Natural killer cell (primary cell): ENCODE measurements at regions of chr16 and their contacts with region 1.

Region 1: GRCh38 chr16:46689365-46690280 is at the start of gene ORC6:
- DNase-seq: peak; percentile 96 to 97
- ATAC-seq: peak; percentile 75 to 90 (median 79)
- H3K4me3 ChIP-seq: peak within 1 kb of the TSS; percentile 84
- H3K4me3 Mint-ChIP-seq: no peak within 1 kb of the TSS
- H3K27ac ChIP-seq: peak within 1 kb of the TSS; percentile 94
- H3K27ac Mint-ChIP-seq: no peak within 1 kb of the TSS
- H3K4me1 ChIP-seq: peaks cover 22% of the 10 kb centered on the region
- H3K4me1 Mint-ChIP-seq: peaks cover 21 to 28% of the 10 kb centered on the region in 2 donors
- H3K27me3 ChIP-seq: no peaks in the 10 kb centered on the region
- H3K27me3 Mint-ChIP-seq: no peaks in the 10 kb centered on the region
- CTCF ChIP-seq: peak; percentile 35
- total RNA-seq, gene ORC6: 2.9 to 11.4 (median 5.9) TPM

Region 2: DNA sequence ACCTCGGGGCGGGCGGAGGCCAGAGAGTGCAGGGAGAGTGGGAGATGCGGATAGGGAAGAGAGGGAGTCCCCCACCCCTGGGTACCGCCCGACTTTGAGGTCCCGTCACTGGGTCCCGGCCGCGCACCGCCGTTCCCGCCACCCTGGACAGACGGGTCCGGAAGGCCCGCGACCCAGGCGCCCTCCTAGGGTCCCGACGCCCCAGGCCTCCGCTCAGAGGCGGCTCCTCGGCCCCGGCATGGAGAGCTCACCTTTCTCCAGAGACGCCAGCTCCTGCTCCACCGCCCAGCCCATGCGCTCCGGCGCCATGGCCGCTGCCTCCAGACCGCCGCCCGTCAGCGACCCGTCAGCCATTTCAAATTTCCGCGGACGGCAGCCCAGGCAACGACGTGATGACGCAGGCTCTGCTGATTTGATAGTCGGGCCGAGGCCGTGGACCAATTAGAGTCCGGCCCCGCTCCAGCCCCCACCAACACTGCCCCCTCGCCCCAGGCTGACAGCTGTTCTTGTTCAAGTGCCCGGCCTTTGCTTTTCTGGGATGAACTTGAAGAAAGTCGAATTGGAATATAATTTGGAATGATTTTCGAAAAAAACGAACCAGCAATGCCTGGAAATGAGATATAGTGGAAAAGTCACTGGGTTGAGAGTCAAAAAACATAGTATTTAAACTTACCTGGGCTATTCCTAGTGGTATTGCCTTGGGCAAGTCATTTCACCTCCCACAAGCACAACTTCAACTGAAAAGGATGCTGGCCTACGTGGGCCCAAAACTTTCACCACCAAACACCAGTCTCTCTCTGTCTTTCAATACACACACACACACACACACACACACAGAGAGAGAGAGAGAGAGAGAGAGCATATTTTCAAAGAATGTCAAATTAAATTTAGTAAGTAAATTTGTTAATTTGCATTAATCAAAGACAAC is 68.4 kb before region 1 on chr16 and contains the start of gene SHCBP1:
- intact Hi-C with region 1: loop called (anchors 2 kb)
- DNase-seq: peak; percentile 60 to 77
- ATAC-seq: peak; percentile 90 to 96 (median 96)
- H3K4me3 ChIP-seq: peak within 1 kb of the TSS; percentile 41
- H3K4me3 Mint-ChIP-seq: peak within 1 kb of the TSS; percentile 95
- H3K27ac ChIP-seq: no peak within 1 kb of the TSS
- H3K27ac Mint-ChIP-seq: peak within 1 kb of the TSS; percentile 77 to 89
- H3K4me1 ChIP-seq: peaks cover 9% of the 10 kb centered on the region
- H3K4me1 Mint-ChIP-seq: peaks cover 18 to 22% of the 10 kb centered on the region in 2 donors
- H3K27me3 ChIP-seq: no peaks in the 10 kb centered on the region
- H3K27me3 Mint-ChIP-seq: no peaks in the 10 kb centered on the region
- CTCF ChIP-seq: no peak
- total RNA-seq, gene SHCBP1: 2.2 to 3.6 (median 3.5) TPM

Region 3: DNA sequence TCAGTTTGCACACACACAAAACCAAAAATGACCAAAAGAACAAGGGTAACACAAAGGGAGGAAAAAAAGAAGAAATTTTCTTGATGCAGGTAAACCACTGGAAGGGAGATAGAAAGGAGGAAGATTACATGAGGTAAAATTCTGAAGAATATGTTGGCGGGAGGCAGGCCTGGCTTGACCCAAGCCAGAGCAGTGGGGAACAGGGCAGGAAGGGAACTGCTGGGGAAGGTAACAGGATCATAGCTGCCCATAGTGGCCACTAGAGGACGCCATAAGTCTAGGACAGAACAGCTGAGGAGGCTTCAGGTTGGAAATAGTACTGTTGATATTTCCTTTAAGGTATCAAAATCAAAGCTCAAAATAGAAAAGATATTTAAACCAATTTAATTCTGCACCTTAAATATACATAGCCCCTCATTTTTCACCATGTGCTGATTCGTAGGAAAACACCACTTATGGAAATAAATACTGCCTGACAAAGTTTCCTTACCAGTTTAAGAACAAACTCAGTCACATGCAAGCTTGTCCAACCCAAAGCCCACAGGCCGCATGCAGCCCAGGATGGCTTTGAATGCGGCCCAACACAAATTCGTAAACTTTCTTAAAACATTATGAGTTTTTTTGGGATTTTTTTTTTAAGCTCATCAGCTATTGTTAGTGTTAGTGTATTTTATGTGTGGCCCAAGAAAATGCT is 16.2 kb before region 1 on chr16:
- intact Hi-C with region 1: loop called (anchors 1 kb)
- DNase-seq: peak in 1 of 2 donors; percentile 80
- ATAC-seq: peak; percentile 79 to 86 (median 84)
- H3K4me3 ChIP-seq: no peak overlapping the region
- H3K4me3 Mint-ChIP-seq: no peak overlapping the region
- H3K27ac ChIP-seq: no peak overlapping the region
- H3K27ac Mint-ChIP-seq: no peak overlapping the region
- H3K4me1 ChIP-seq: no peaks in the 10 kb centered on the region
- H3K4me1 Mint-ChIP-seq: no peaks in the 10 kb centered on the region
- H3K27me3 ChIP-seq: no peaks in the 10 kb centered on the region
- H3K27me3 Mint-ChIP-seq: no peaks in the 10 kb centered on the region
- CTCF ChIP-seq: peak; percentile 87

Region 4: DNA sequence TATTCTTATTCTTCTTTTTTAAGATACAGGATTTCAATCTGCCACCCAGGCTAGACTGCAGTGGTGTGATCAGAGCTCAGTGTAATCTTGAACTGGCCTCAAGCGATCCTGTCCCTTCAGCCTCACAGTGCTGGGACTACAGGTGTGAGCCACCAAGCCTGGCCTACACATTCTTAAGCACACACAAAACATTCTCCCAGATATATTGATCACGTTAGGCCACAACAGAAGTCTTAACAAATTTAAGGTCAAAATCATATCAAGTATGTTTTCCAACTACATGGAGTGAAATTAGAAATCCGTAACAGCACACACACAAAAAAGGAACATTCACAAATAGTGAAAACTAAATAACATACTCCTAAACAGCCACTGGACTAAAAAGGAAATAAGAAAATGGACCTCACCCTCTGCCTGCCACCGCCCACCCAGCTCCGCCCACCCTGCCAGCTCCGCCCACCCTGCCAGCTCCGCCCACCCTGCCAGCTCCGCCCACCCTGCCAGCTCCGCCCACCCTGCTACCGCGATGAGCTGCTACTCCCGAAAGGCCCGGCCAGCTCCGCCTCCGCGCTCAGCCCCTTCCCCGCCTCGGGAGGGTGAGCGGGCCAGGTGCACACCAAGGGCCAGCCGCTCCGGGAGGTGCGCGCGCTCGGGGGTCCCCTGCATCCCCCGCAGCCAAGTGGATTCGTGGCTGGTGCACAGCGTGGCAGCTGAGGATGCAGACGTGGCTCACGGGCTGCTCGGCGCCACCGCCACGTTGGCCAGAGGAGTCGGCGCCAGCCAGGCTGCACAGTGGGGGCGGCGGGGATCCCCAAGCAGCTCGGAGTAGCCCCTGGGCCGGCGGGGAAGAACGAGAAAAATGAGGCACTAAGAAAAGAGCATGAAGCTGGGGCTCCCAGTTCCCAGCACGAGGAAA is 100.1 kb after region 1 on chr16:
- intact Hi-C with region 1: loop called (anchors 1 kb)
- DNase-seq: peak; percentile 74 to 84
- ATAC-seq: peak; percentile 98 to 99 (median 98)
- H3K4me3 ChIP-seq: peak overlapping the region; percentile 55
- H3K4me3 Mint-ChIP-seq: peak overlapping the region; percentile 81
- H3K27ac ChIP-seq: no peak overlapping the region
- H3K27ac Mint-ChIP-seq: peak overlapping the region in 1 of 2 donors; percentile 75
- H3K4me1 ChIP-seq: peaks cover 9% of the 10 kb centered on the region
- H3K4me1 Mint-ChIP-seq: peaks cover 12 to 18% of the 10 kb centered on the region in 2 donors
- H3K27me3 ChIP-seq: no peaks in the 10 kb centered on the region
- H3K27me3 Mint-ChIP-seq: no peaks in the 10 kb centered on the region
- CTCF ChIP-seq: no peak

Region 5: GRCh38 chr16:46830902-46831647 is 141.5 kb after region 1 on chr16 and contains the start of gene C16orf87:
- intact Hi-C with region 1: loop called (anchors 1 kb)
- DNase-seq: peak; percentile 90 to 96
- ATAC-seq: peak; percentile 91 to 98 (median 91)
- H3K4me3 ChIP-seq: peak within 1 kb of the TSS; percentile 66
- H3K4me3 Mint-ChIP-seq: peak within 1 kb of the TSS; percentile 97
- H3K27ac ChIP-seq: peak within 1 kb of the TSS; percentile 77
- H3K27ac Mint-ChIP-seq: peak within 1 kb of the TSS; percentile 75 to 91
- H3K4me1 ChIP-seq: peaks cover 6% of the 10 kb centered on the region
- H3K4me1 Mint-ChIP-seq: peaks cover 16 to 23% of the 10 kb centered on the region in 2 donors
- H3K27me3 ChIP-seq: no peaks in the 10 kb centered on the region
- H3K27me3 Mint-ChIP-seq: no peaks in the 10 kb centered on the region
- CTCF ChIP-seq: no peak
- total RNA-seq, gene C16orf87: 18.3 to 23.0 (median 18.8) TPM

Region 6: DNA sequence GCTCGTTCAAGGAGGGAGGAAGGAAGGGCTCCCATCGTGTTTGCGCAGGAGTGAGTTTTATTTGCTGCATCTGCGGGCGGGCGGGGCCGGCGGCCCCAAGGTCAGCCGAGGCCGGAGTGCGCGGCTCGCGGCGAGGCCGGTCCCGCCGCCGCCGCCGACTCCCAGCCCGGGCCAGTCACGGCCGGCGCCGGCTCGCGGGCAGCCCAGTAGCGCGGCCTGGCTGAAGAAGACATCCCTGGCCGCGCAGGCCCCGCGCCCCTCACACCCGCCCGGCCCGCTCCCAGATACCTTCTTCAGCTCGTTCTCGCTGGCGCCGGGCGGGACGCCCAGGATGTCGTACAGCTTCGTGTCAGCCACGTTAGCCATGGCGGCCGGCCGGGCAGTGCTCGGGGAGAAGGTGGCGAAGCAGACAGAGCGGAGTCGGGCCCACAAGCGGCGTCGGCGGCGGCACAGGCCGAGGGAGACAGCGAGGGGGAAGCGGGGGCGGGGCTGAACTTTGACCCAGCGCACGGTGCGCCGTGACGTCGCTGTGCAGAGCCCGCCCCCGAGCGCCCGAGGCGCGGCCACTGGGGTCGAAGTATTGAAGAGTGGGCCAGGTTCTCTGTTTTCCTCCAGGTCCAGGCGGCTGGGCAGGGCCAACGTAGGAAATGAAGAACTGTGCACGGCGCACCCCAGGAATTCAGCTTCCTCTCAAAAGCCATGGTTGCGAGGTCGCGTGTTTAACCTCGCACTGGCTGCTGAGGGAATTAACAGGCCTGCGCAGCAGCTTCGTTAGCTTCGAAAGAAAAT is 283.8 kb after region 1 on chr16 and contains the start of gene DNAJA2:
- intact Hi-C with region 1: loop called (anchors 1 kb)
- DNase-seq: peak; percentile 94 to 96
- ATAC-seq: peak; percentile 91 to 99 (median 93)
- H3K4me3 ChIP-seq: peak within 1 kb of the TSS; percentile 76
- H3K4me3 Mint-ChIP-seq: peak within 1 kb of the TSS; percentile 94
- H3K27ac ChIP-seq: peak within 1 kb of the TSS; percentile 97
- H3K27ac Mint-ChIP-seq: peak within 1 kb of the TSS; percentile 95 to 98
- H3K4me1 ChIP-seq: peaks cover 18% of the 10 kb centered on the region
- H3K4me1 Mint-ChIP-seq: peaks cover 28 to 33% of the 10 kb centered on the region in 2 donors
- H3K27me3 ChIP-seq: no peaks in the 10 kb centered on the region
- H3K27me3 Mint-ChIP-seq: no peaks in the 10 kb centered on the region
- CTCF ChIP-seq: no peak
- total RNA-seq, gene DNAJA2: 71.8 to 83.2 (median 74.5) TPM